Astrocyte of the cerebellum (primary cell): ENCODE measurements at regions of chr4 and their contacts with region 1.

Region 1: GRCh38 chr4:27000820-27001219 is 140.2 kb downstream of the STIM2 start:
- DNase-seq: no peak
- H3K4me3 ChIP-seq: no peak overlapping the region
- CTCF ChIP-seq: peak; percentile 35

Region 2: GRCh38 chr4:26459054-26459755 is 541.6 kb before region 1 on chr4:
- in situ Hi-C with region 1: loop called (anchors 10 kb)
- DNase-seq: peak; percentile 58
- H3K4me3 ChIP-seq: no peak overlapping the region
- CTCF ChIP-seq: peak; percentile 59

Region 3: GRCh38 chr4:26916195-26916594 is 84.6 kb before region 1 on chr4:
- in situ Hi-C with region 1: no loop called
- DNase-seq: no peak
- H3K4me3 ChIP-seq: no peak overlapping the region
- CTCF ChIP-seq: no peak

Region 4: GRCh38 chr4:27088491-27088890 is 87.7 kb after region 1 on chr4:
- in situ Hi-C with region 1: no loop called
- DNase-seq: no peak
- H3K4me3 ChIP-seq: no peak overlapping the region
- CTCF ChIP-seq: no peak